Naive thymus-derived CD4-positive, alpha-beta T cell (primary cell): ENCODE measurements at regions of chr4 and their contacts with region 1.

Region 1: DNA sequence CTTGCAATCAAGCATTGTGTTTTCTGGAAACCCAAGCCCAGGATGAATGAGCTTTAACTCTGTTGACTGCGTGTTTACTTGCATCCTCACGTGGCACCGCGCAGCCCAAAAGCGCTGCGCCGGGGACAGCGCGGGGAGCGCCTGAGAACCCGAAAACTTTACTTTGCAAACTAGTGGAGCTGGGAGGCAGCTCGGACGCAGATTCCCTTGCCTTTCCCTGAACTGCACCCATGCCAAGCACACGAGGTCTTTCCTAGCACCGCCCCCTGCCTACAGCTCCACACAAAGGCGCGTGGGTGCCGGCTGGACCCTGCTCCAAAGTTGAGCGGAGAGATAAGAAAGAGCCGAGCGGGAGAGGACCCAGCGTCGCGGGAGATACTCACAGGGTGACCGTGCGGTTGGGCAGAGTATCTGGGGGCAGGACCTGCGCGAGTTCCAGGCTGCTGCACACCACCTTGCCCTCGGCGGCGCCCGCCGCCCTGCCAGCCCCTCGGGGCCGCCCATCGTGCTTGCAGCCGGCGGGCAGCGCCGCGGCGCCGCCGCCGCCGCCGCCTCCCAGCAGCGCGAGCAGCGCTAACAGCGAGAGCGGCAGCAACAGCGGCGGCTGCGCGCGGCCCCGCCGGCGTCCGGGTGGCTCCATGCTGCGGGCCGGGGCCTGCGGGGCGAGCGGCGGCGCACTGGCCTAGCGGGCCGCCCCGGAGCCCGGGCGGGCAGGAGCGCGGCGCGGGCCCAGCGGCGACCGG is 550 bp downstream of the ADGRA3 start:
- DNase-seq: peak in 8 of 9 donors; percentile 17 to 56 (median 36)
- ATAC-seq: peak; percentile 75
- H3K4me3 ChIP-seq: peak overlapping the region; percentile 63
- H3K4me3 Mint-ChIP-seq: peak overlapping the region; percentile 90 to 99 (median 97)
- H3K27ac ChIP-seq: peak overlapping the region; percentile 40
- H3K27ac Mint-ChIP-seq: peak overlapping the region; percentile 56 to 92 (median 83)
- H3K4me1 ChIP-seq: peaks cover 0 to 3% of the 10 kb centered on the region in 2 donors
- H3K4me1 Mint-ChIP-seq: peaks cover 7 to 34% (median 27%) of the 10 kb centered on the region in 7 donors
- H3K27me3 ChIP-seq: no peaks in the 10 kb centered on the region
- H3K27me3 Mint-ChIP-seq: peaks cover 0 to 15% (median 0%) of the 10 kb centered on the region in 5 donors

Region 2: GRCh38 chr4:22410645-22411247 is 104.6 kb before region 1 on chr4:
- CTCF ChIA-PET with region 1: no interaction called
- POLR2A ChIA-PET with region 1: no interaction called
- intact Hi-C with region 1: loop called (anchors 5 to 10 kb)
- DNase-seq: peak in 5 of 9 donors; percentile 8 to 39 (median 18)
- ATAC-seq: no peak
- H3K4me3 ChIP-seq: no peak overlapping the region
- H3K4me3 Mint-ChIP-seq: no peak overlapping the region
- H3K27ac ChIP-seq: no peak overlapping the region
- H3K27ac Mint-ChIP-seq: no peak overlapping the region
- H3K4me1 ChIP-seq: no peaks in the 10 kb centered on the region
- H3K4me1 Mint-ChIP-seq: no peaks in the 10 kb centered on the region
- H3K27me3 ChIP-seq: no peaks in the 10 kb centered on the region
- H3K27me3 Mint-ChIP-seq: no peaks in the 10 kb centered on the region

Region 3: DNA sequence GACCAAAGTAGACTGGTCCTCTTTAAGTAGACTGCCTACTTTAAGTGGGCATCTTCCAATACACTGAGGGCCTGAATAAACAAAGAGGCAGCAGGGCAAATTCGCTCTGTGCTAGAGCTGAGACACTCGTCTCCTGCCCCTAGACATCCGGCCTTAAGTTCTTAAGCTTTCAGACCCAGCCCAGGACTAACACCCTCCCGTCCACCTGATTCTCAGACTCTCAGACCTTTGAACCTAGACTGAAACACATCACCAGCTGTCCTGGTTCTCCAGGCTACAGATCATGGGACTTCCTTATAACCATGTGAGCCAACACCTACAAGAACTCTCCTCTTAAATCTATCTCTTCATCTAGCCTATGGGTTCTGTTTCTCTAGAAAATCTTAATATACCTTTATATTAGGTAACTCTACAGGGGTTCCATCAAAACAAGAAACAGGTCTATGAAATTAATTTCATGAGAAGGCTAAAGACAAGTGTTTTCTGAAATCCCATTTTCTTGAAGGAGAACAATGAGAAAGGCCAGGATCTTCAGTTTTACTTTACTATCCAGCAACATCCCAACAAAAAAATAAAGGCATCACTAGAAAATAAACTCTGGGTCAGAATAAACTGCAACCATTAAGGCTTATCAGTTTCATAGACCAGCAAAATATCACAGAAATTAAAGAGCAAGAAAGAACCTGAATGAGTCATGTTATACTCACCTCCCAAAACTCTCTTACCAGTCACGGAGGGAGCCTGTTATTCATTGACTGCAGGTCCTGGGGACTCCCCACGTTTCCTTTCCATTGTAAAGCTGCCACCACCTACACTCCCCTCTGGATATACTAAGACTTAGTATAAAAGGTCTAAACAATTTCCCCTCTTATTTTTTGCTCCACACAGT is 14.2 kb before region 1 on chr4:
- CTCF ChIA-PET with region 1: no interaction called
- POLR2A ChIA-PET with region 1: no interaction called
- intact Hi-C with region 1: loop called in 1 of 2 experiments (anchors 2 kb)
- DNase-seq: peak in 1 of 9 donors; percentile 35
- ATAC-seq: no peak
- H3K4me3 ChIP-seq: no peak overlapping the region
- H3K4me3 Mint-ChIP-seq: no peak overlapping the region
- H3K27ac ChIP-seq: no peak overlapping the region
- H3K27ac Mint-ChIP-seq: no peak overlapping the region
- H3K4me1 ChIP-seq: no peaks in the 10 kb centered on the region
- H3K4me1 Mint-ChIP-seq: peaks cover 0 to 22% (median 13%) of the 10 kb centered on the region in 7 donors
- H3K27me3 ChIP-seq: no peaks in the 10 kb centered on the region
- H3K27me3 Mint-ChIP-seq: no peaks in the 10 kb centered on the region

Region 4: GRCh38 chr4:22552812-22553211 is 37.5 kb after region 1 on chr4:
- CTCF ChIA-PET with region 1: no interaction called
- POLR2A ChIA-PET with region 1: no interaction called
- intact Hi-C with region 1: no loop called
- DNase-seq: no peak
- ATAC-seq: no peak
- H3K4me3 ChIP-seq: no peak overlapping the region
- H3K4me3 Mint-ChIP-seq: no peak overlapping the region
- H3K27ac ChIP-seq: no peak overlapping the region
- H3K27ac Mint-ChIP-seq: no peak overlapping the region
- H3K4me1 ChIP-seq: no peaks in the 10 kb centered on the region
- H3K4me1 Mint-ChIP-seq: peaks cover 0 to 6% (median 0%) of the 10 kb centered on the region in 7 donors
- H3K27me3 ChIP-seq: no peaks in the 10 kb centered on the region
- H3K27me3 Mint-ChIP-seq: no peaks in the 10 kb centered on the region

Region 5: GRCh38 chr4:22670956-22671355 is 155.6 kb after region 1 on chr4:
- CTCF ChIA-PET with region 1: no interaction called
- POLR2A ChIA-PET with region 1: interaction called, 3 read pairs
- intact Hi-C with region 1: loop called (anchors 5 kb)
- DNase-seq: no peak
- ATAC-seq: no peak
- H3K4me3 ChIP-seq: no peak overlapping the region
- H3K4me3 Mint-ChIP-seq: peak overlapping the region in 3 of 10 donors; percentile 7 to 62 (median 57)
- H3K27ac ChIP-seq: no peak overlapping the region
- H3K27ac Mint-ChIP-seq: peak overlapping the region in 7 of 9 donors; percentile 12 to 94 (median 71)
- H3K4me1 ChIP-seq: peaks cover 0 to 56% of the 10 kb centered on the region in 2 donors
- H3K4me1 Mint-ChIP-seq: peaks cover 41 to 92% (median 82%) of the 10 kb centered on the region in 7 donors
- H3K27me3 ChIP-seq: no peaks in the 10 kb centered on the region
- H3K27me3 Mint-ChIP-seq: no peaks in the 10 kb centered on the region